ENCODE measurements at regions of chr12 and their contacts with region 1.

Region 1: DNA sequence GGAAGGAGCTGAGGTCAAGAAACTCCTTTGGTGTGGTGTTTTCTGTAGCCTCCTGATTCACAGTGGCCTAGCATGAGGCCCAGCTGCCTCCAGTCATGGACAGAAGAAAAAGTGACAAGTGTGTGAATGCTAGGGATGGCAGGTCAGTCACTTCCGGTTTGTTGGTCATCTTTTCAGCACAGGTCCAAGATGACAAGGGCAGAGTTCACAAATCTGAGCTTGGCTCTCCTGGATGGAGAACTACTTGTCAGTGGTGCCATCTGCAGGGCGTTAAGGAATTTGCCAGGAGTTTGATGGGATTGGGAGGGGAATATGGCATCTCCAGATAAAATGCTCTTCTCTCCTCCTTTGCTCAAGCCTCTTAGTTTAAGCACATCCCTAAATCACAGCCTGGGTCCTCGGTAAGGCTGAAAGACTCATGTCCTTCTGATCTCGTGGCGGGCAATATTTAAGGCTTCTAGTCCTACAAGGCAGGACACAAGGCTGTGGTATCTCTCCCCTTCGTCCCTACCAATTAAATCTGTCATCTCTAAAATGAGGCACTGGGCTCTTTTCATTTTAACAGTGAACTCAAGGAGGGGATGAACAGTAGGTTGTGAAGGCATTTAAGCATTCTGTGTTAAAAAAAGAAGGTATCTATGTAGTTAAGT is 10.0 kb downstream of the TUBA1B start:
- DNase-seq: no peak
- ATAC-seq: peak in 1 of 2 donors; percentile 87

Region 2: DNA sequence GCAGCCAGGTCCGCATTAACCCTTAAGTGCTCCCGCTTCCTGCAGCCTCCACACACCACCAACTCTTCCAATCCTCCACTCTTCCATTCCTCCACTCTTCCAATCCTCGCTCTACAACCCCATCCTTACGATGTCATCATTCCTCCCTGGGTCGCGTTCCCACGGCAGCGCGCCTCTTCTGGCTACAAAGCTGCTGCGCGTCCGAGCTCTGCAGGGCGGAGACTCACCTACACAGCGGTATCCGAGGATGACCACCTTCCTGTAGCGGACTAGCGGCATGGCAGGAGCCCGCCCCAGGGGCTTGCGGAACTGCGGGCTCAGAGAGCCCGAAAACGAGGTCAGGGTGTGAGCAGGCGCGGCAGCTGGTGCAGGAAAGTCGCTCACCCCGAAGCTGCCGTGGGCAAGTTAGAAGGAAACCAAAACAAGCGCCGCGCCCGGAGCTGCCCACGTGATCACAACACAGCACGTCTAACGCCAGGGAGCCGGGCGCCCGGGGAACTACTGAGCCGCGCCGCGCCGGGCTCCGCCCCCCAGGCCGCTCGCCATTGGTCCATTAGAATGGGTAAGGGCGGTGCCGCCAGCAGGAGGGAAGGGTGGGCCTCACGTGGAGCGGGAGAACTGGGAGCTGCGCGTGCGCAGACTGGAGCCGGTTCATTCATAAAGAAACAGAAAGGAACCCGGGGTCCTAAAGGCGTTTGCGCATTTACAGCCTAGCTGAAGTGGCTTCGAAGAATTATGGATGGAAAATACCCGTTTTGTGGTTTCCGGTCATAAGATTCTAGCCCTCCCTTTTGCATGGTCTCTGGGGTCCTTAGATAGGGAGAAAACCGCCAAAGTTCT is 51.4 kb before region 1 on chr12 and contains the start of gene RHEBL1:
- intact Hi-C with region 1: loop called (anchors 5 to 10 kb)
- DNase-seq: peak; percentile 99
- ATAC-seq: peak; percentile 100
- total RNA-seq, gene RHEBL1: 0.24 to 0.41 TPM

Region 3: GRCh38 chr12:49088190-49088931 is 32.8 kb before region 1 on chr12:
- intact Hi-C with region 1: loop called (anchors 2 to 5 kb)
- DNase-seq: peak; percentile 80
- ATAC-seq: peak; percentile 88 to 95

Region 4: DNA sequence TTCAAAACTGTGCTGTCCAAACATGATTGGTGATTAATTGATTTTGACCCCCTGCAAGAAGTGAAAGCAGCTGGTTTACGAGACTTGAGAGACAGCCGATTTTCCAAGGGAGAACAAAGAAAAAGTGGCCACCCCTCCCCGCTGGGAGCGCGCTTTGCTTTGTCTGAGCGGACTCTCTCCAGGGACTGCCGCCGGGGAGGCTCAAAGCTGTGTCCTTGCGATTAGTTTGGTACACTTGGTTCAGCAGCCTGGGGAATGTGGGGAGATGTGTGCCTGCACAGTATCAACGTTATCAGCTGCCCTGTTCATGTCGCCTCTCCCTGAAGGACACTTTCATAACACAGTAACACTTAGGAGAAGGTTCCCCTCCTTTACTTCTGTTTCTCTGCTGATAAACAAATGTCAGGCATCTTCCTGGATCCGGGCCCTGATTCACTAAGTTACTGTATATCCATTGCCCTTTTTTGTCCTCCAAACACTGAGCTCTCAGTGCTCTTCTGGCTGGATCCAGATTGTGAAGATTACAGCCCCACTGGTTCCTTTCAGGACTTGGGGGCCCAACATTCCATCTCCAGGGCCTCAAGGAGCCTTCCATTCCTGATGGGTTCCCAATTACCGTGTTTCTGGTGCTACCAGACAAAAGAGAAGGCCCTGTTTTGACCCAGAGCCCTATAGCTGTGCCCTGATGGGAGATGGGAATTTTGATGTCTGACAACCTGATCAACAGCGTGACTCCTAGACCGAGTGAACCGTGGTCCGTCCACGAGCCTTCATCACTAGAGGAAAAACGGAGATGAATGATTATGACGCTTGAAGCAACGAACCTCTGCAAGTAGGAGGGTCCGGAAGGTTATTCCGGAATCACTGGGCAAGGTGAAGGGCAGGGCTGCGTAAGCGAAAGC is 112.0 kb after region 1 on chr12:
- intact Hi-C with region 1: no loop called
- DNase-seq: peak; percentile 68
- ATAC-seq: peak; percentile 46 to 51

Measured in left cardiac atrium (tissue), 4 donors.